ENCODE measurements at regions of chr18 and their contacts with region 1.

Region 1: DNA sequence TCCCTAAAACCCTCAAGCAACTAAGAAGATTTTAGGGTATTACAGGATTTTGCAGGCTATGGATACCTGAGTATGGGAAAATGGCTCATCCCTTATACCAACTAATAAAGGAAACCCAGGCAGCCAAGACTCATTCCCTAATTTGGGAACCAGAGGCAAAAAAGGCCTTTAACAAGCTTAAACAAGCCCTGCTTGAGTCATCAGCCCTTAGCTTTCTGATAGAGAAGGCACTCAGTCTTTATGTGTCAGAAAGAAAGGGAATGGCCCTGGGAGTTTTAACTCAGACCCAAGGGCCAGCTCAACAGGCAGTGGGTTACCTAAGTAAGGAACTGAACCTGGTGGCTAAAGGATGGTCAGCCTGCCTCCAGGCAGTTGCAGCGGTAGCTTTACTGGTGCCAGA is 96.9 kb upstream of the RMP24 start:
- DNase-seq: no peak
- H3K4me3 Mint-ChIP-seq: no peak overlapping the region
- H3K27ac Mint-ChIP-seq: no peak overlapping the region
- H3K4me1 Mint-ChIP-seq: no peaks in the 10 kb centered on the region
- H3K27me3 Mint-ChIP-seq: peaks cover 80% of the 10 kb centered on the region
- CTCF ChIP-seq: no peak

Region 2: DNA sequence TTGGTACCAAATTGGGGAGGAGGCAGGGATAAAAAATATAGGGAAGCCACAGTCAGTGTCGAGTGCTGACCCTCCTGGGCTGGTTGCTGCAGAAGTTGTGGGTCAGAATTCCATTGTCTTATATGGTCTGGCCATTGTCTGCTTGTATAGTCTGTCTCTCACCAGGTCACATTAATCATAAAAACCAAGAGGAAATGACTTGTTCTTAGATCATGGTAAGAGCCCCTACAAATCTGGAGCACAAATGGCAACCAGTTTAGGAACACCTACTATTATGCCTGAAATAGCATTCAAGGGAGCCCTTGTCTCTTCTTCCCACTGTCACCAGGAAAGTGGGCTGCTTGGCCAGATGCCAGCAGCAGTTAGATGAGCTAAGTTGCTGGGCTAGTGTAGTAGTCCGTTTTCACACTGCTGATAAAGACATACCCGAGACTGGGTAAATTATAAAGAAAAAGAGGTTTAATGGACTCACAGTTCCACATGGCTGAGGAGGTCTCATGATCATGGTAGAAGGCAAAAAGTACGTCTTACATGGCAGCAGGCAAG is 22.7 kb before region 1 on chr18:
- CTCF ChIA-PET with region 1: no interaction called
- intact Hi-C with region 1: loop called (anchors 1 kb)
- DNase-seq: no peak
- H3K4me3 Mint-ChIP-seq: no peak overlapping the region
- H3K27ac Mint-ChIP-seq: no peak overlapping the region
- H3K4me1 Mint-ChIP-seq: no peaks in the 10 kb centered on the region
- H3K27me3 Mint-ChIP-seq: peaks cover 48% of the 10 kb centered on the region
- CTCF ChIP-seq: no peak

Region 3: DNA sequence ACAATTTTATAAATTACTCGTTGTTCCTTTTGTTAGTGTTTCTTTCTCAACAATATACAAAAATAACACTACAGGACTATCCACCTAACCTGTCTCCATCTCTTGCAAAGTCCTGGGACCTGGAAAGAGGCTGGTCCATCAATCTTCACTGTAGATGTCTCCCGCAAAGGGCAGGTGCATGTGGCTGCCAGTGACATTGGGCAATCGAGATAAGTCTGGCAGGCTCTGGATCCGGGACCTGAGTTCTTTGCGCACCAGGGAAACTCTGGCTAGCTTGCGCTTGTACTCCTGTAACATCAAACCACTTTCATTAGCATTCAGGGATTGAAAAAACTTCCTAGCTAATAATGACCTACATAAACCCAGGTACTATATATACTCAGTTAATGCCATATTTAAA is 117.4 kb after region 1 on chr18:
- CTCF ChIA-PET with region 1: no interaction called
- intact Hi-C with region 1: no loop called
- DNase-seq: no peak
- H3K4me3 Mint-ChIP-seq: no peak overlapping the region
- H3K27ac Mint-ChIP-seq: no peak overlapping the region
- H3K4me1 Mint-ChIP-seq: no peaks in the 10 kb centered on the region
- H3K27me3 Mint-ChIP-seq: no peaks in the 10 kb centered on the region
- CTCF ChIP-seq: no peak